IMR-90 (cell line): ENCODE measurements at regions of chr1 and their contacts with region 1.

Region 1: DNA sequence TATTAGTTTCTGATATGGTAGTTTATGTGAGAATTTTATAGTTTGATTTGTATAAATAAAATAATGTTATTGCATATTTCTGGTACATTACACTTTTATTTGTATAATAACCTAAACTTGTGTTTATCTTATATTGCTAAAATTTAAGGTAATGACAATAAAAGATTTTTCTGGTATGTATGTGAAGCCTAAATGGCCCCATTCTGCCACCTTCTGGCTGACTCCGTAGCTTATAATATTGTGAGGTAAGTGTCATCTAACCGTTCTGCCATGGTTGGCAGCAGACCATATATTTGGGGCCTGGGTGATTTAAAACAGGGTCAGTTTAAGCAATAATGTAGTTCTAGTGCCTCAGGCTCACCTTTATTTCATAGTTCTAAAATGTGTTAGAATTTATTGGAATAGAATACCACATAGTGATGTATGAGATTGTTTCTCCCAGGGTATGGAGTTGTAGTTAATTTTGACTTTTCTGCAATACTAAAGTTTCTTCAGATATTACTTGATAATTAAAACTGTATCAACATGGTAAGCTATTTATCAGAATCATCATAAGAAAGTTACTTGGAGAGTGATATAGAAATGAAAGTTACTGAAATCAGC is 21.2 kb upstream of the PRKACB start:
- DNase-seq: peak; percentile 58
- ATAC-seq: peak; percentile 81
- H3K4me3 ChIP-seq: no peak overlapping the region
- H3K27ac ChIP-seq: no peak overlapping the region
- H3K4me1 ChIP-seq: peaks cover 3% of the 10 kb centered on the region
- H3K27me3 ChIP-seq: no peaks in the 10 kb centered on the region
- CTCF ChIP-seq: peak; percentile 79
- POLR2A ChIP-seq: no peak
- RAD21 ChIP-seq: peak; percentile 84

Region 2: GRCh38 chr1:83882906-83883305 is 240.0 kb before region 1 on chr1:
- CTCF ChIA-PET with region 1: no interaction called
- POLR2A ChIA-PET with region 1: no interaction called
- dilution Hi-C with region 1: no loop called
- in situ Hi-C with region 1: no loop called
- intact Hi-C with region 1: no loop called
- DNase-seq: peak; percentile 58
- ATAC-seq: peak; percentile 60
- H3K4me3 ChIP-seq: no peak overlapping the region
- H3K27ac ChIP-seq: no peak overlapping the region
- H3K4me1 ChIP-seq: no peaks in the 10 kb centered on the region
- H3K27me3 ChIP-seq: no peaks in the 10 kb centered on the region
- CTCF ChIP-seq: 0 out of 2 replicates have a peak, but pooled peaks have one; percentile 8
- POLR2A ChIP-seq: no peak
- RAD21 ChIP-seq: no peak

Region 3: GRCh38 chr1:83905315-83905907 is 217.5 kb before region 1 on chr1:
- CTCF ChIA-PET with region 1: no interaction called
- POLR2A ChIA-PET with region 1: no interaction called
- dilution Hi-C with region 1: no loop called
- in situ Hi-C with region 1: no loop called
- intact Hi-C with region 1: loop called (anchors 1 kb)
- DNase-seq: peak; percentile 22
- ATAC-seq: no peak
- H3K4me3 ChIP-seq: no peak overlapping the region
- H3K27ac ChIP-seq: no peak overlapping the region
- H3K4me1 ChIP-seq: peaks cover 2% of the 10 kb centered on the region; the same call in 1 of the 2 replicates
- H3K27me3 ChIP-seq: no peaks in the 10 kb centered on the region
- CTCF ChIP-seq: peak; percentile 60
- POLR2A ChIP-seq: no peak
- RAD21 ChIP-seq: peak; percentile 48; the same call in 1 of the 2 replicates

Region 4: GRCh38 chr1:83920320-83920719 is 202.6 kb before region 1 on chr1:
- CTCF ChIA-PET with region 1: no interaction called
- POLR2A ChIA-PET with region 1: no interaction called
- dilution Hi-C with region 1: no loop called
- in situ Hi-C with region 1: loop called (anchors 5 kb)
- intact Hi-C with region 1: no loop called
- DNase-seq: no peak
- ATAC-seq: no peak
- H3K4me3 ChIP-seq: no peak overlapping the region
- H3K27ac ChIP-seq: no peak overlapping the region
- H3K4me1 ChIP-seq: 0 out of 2 replicates have a peak, but pooled peaks cover 1% of the 10 kb centered on the region
- H3K27me3 ChIP-seq: no peaks in the 10 kb centered on the region
- CTCF ChIP-seq: no peak
- POLR2A ChIP-seq: no peak
- RAD21 ChIP-seq: no peak

Region 5: GRCh38 chr1:83931658-83932253 is 191.1 kb before region 1 on chr1:
- CTCF ChIA-PET with region 1: interaction called, 4 read pairs
- POLR2A ChIA-PET with region 1: no interaction called
- dilution Hi-C with region 1: no loop called
- in situ Hi-C with region 1: no loop called
- intact Hi-C with region 1: loop called (anchors 1 kb)
- DNase-seq: peak; percentile 60
- ATAC-seq: peak; percentile 76
- H3K4me3 ChIP-seq: no peak overlapping the region
- H3K27ac ChIP-seq: no peak overlapping the region
- H3K4me1 ChIP-seq: peaks cover 4% of the 10 kb centered on the region; the same call in 1 of the 2 replicates
- H3K27me3 ChIP-seq: no peaks in the 10 kb centered on the region
- CTCF ChIP-seq: peak; percentile 84
- POLR2A ChIP-seq: no peak
- RAD21 ChIP-seq: peak; percentile 84

Region 6: GRCh38 chr1:83998498-83999315 is 124.2 kb before region 1 on chr1 and contains the start of gene TTLL7:
- CTCF ChIA-PET with region 1: no interaction called
- POLR2A ChIA-PET with region 1: no interaction called
- dilution Hi-C with region 1: no loop called
- in situ Hi-C with region 1: no loop called
- intact Hi-C with region 1: loop called (anchors 2 kb)
- DNase-seq: peak; percentile 53
- ATAC-seq: peak; percentile 92
- H3K4me3 ChIP-seq: peak within 1 kb of the TSS; percentile 76
- H3K27ac ChIP-seq: peak within 1 kb of the TSS; percentile 89
- H3K4me1 ChIP-seq: no peaks in the 10 kb centered on the region; the same call in 1 of the 2 replicates
- H3K27me3 ChIP-seq: no peaks in the 10 kb centered on the region
- CTCF ChIP-seq: no peak
- POLR2A ChIP-seq: no peak
- RAD21 ChIP-seq: no peak
- total RNA-seq, gene TTLL7: 8.1 and 13.3 TPM in 2 replicates

Region 7: GRCh38 chr1:84077476-84078107 is 45.3 kb before region 1 on chr1:
- CTCF ChIA-PET with region 1: interaction called, 3 read pairs
- POLR2A ChIA-PET with region 1: no interaction called
- dilution Hi-C with region 1: no loop called
- in situ Hi-C with region 1: no loop called
- intact Hi-C with region 1: loop called (anchors 5 kb)
- DNase-seq: peak; percentile 64
- ATAC-seq: peak; percentile 94
- H3K4me3 ChIP-seq: peak overlapping the region; percentile 93
- H3K27ac ChIP-seq: peak overlapping the region; percentile 98
- H3K4me1 ChIP-seq: no peaks in the 10 kb centered on the region; the same call in 1 of the 2 replicates
- H3K27me3 ChIP-seq: no peaks in the 10 kb centered on the region
- CTCF ChIP-seq: no peak
- POLR2A ChIP-seq: peak; percentile 81
- RAD21 ChIP-seq: no peak